Natural killer cell (primary cell): ENCODE measurements at regions of chr14 and their contacts with region 1.

Region 1: GRCh38 chr14:90903101-90903500 is 86.9 kb upstream of the TTC7B start:
- DNase-seq: peak; percentile 26 to 80
- ATAC-seq: peak; percentile 82 to 94 (median 86)
- H3K4me3 ChIP-seq: no peak overlapping the region
- H3K4me3 Mint-ChIP-seq: no peak overlapping the region
- H3K27ac ChIP-seq: no peak overlapping the region
- H3K27ac Mint-ChIP-seq: no peak overlapping the region
- H3K4me1 ChIP-seq: no peaks in the 10 kb centered on the region
- H3K4me1 Mint-ChIP-seq: peaks cover 0 to 3% of the 10 kb centered on the region in 2 donors
- H3K27me3 ChIP-seq: no peaks in the 10 kb centered on the region
- H3K27me3 Mint-ChIP-seq: no peaks in the 10 kb centered on the region
- CTCF ChIP-seq: peak; percentile 85

Region 2: DNA sequence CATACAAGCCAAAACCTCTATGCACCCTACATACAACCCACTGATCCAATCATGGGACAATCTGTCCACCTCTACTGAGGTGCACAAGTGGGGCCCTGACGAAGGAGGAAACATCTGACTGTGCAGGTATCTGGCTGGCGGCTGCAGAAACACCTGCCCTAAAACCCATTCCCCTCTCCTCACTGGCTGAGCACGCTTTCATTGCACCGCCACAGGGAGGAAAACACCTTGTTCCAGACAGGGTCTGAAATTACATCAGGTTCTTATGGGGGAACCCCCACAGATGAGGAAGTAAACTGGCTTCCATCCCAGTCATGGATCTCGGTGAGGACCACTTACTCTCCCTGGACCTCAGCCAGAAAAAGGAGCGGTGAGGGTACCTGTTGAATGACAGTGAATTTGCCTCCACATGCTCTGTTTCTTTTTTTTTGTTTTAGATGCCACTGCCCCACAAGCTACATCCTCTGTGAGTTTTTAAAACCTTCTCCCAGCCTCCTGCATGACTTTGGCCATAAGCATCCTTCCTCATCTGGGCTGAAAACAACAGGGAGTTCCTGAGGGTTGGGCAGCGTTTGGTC is 186.9 kb after region 1 on chr14:
- intact Hi-C with region 1: no loop called
- DNase-seq: no peak
- ATAC-seq: no peak
- H3K4me3 ChIP-seq: no peak overlapping the region
- H3K4me3 Mint-ChIP-seq: no peak overlapping the region
- H3K27ac ChIP-seq: no peak overlapping the region
- H3K27ac Mint-ChIP-seq: no peak overlapping the region
- H3K4me1 ChIP-seq: no peaks in the 10 kb centered on the region
- H3K4me1 Mint-ChIP-seq: no peaks in the 10 kb centered on the region
- H3K27me3 ChIP-seq: no peaks in the 10 kb centered on the region
- H3K27me3 Mint-ChIP-seq: peaks cover 0 to 4% of the 10 kb centered on the region in 2 donors
- CTCF ChIP-seq: no peak

Region 3: GRCh38 chr14:91286530-91286937 is 383.4 kb after region 1 on chr14:
- intact Hi-C with region 1: loop called (anchors 1 kb)
- DNase-seq: peak; percentile 76 to 88
- ATAC-seq: peak; percentile 76 to 82 (median 79)
- H3K4me3 ChIP-seq: no peak overlapping the region
- H3K4me3 Mint-ChIP-seq: no peak overlapping the region
- H3K27ac ChIP-seq: peak overlapping the region; percentile 5
- H3K27ac Mint-ChIP-seq: peak overlapping the region; percentile 81 to 83
- H3K4me1 ChIP-seq: peaks cover 20% of the 10 kb centered on the region
- H3K4me1 Mint-ChIP-seq: peaks cover 33 to 36% of the 10 kb centered on the region in 2 donors
- H3K27me3 ChIP-seq: no peaks in the 10 kb centered on the region
- H3K27me3 Mint-ChIP-seq: no peaks in the 10 kb centered on the region
- CTCF ChIP-seq: peak; percentile 83

Region 4: DNA sequence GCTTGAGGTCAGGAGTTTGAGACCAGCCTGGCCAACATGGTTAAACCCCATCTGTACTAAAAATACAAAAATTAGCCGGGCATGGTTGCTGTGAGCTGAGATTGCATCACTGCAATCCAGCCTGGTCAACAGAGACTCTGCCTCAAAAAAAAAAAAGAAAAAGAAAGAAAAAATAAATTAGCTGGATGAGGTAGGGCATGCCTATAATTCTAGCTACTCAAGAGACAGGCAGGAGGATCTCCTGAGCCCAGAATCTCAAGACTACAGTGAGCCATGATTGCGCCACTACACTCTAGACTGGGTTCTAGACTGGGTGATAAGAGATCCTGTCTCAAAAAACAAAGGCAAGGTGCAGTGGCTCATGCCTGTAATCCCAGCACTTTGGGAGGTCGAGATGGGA is 590.1 kb after region 1 on chr14:
- intact Hi-C with region 1: no loop called
- DNase-seq: no peak
- ATAC-seq: no peak
- H3K4me3 ChIP-seq: no peak overlapping the region
- H3K4me3 Mint-ChIP-seq: peak overlapping the region; percentile 2
- H3K27ac ChIP-seq: no peak overlapping the region
- H3K27ac Mint-ChIP-seq: peak overlapping the region in 1 of 2 donors; percentile 74
- H3K4me1 ChIP-seq: peaks cover 42% of the 10 kb centered on the region
- H3K4me1 Mint-ChIP-seq: peaks cover 63 to 74% of the 10 kb centered on the region in 2 donors
- H3K27me3 ChIP-seq: no peaks in the 10 kb centered on the region
- H3K27me3 Mint-ChIP-seq: no peaks in the 10 kb centered on the region
- CTCF ChIP-seq: no peak